ENCODE measurements at regions of chr1 and their contacts with region 1.

Region 1: DNA sequence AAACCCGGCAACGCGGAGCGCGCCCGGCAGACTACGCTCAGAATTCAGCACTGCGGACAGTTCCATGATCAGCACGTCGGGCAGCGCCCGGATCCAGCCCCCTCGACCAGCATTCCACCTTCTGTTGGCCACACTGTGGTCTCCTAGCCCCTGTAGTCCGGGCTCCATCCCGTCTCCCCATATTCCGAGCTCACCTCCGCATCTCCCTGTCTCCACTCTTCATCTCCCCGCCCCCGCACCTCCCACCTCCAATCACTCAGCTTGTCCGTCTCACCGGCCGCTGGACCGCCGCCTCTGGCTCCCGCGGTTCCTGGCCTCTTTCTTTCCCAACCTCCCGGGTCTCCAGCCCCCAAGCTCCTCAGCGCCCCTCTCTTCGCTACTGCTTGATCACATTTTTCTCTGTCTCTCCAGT is 500 bp downstream of the EPHA10 start:
- DNase-seq: peak in 5 of 9 donors; percentile 11 to 62 (median 14)
- ATAC-seq: no peak
- H3K4me3 ChIP-seq: no peak overlapping the region
- H3K4me3 Mint-ChIP-seq: peak overlapping the region in 4 of 10 donors; percentile 26 to 52 (median 46)
- H3K27ac ChIP-seq: no peak overlapping the region
- H3K27ac Mint-ChIP-seq: no peak overlapping the region
- H3K4me1 ChIP-seq: no peaks in the 10 kb centered on the region
- H3K4me1 Mint-ChIP-seq: peaks cover 4 to 22% (median 20%) of the 10 kb centered on the region in 7 donors
- H3K27me3 ChIP-seq: peaks cover 0 to 9% of the 10 kb centered on the region in 2 donors
- H3K27me3 Mint-ChIP-seq: peaks cover 60 to 71% (median 68%) of the 10 kb centered on the region in 5 donors

Region 2: DNA sequence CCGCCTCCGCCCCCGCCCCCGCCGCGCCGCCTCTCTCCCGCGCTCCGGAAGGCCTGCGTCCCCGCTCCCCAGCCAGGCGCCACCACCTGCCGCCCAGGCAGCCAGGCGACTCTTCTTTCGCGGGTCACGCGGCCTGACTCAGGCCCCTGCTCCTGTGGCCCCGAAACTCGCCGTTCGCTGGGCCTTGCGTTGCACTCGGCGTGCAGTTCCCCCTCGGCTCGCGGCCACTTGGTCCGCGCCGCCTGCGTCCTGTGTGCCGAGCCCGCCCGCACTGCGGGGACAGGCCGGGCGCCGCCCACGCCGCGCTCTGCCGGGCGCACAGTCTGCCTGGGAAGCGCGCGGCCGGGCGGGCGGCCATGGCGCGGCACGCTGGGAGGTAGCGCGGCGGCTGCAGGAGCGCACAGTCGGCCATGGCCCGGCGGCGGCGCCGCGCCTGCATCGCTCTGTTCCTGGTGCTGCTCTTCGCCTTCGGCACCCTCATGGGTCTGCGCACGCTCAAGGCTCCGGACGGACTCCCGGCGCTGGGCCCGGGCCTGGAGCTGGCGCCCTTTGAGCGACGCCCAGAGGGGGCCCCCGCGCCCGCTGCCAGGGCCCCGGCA is 29.5 kb after region 1 on chr1 and contains the start of gene MANEAL:
- CTCF ChIA-PET with region 1: no interaction called
- POLR2A ChIA-PET with region 1: no interaction called
- intact Hi-C with region 1: loop called in 1 of 2 experiments (anchors 2 kb)
- DNase-seq: peak in 5 of 9 donors; percentile 4 to 57 (median 24)
- ATAC-seq: peak; percentile 81
- H3K4me3 ChIP-seq: no peak within 1 kb of the TSS
- H3K4me3 Mint-ChIP-seq: peak within 1 kb of the TSS; percentile 35 to 82 (median 75)
- H3K27ac ChIP-seq: no peak within 1 kb of the TSS
- H3K27ac Mint-ChIP-seq: no peak within 1 kb of the TSS
- H3K4me1 ChIP-seq: peaks cover 3 to 8% of the 10 kb centered on the region in 2 donors
- H3K4me1 Mint-ChIP-seq: peaks cover 8 to 25% (median 14%) of the 10 kb centered on the region in 7 donors
- H3K27me3 ChIP-seq: peaks cover 0 to 8% of the 10 kb centered on the region in 2 donors
- H3K27me3 Mint-ChIP-seq: peaks cover 33 to 43% (median 38%) of the 10 kb centered on the region in 5 donors
- total RNA-seq, gene MANEAL: 0.66 to 2.1 (median 1.1) TPM

Region 3: GRCh38 chr1:38138498-38139233 is 374.2 kb after region 1 on chr1:
- CTCF ChIA-PET with region 1: no interaction called
- POLR2A ChIA-PET with region 1: no interaction called
- intact Hi-C with region 1: no loop called
- DNase-seq: no peak
- ATAC-seq: no peak
- H3K4me3 ChIP-seq: no peak overlapping the region
- H3K4me3 Mint-ChIP-seq: no peak overlapping the region
- H3K27ac ChIP-seq: no peak overlapping the region
- H3K27ac Mint-ChIP-seq: no peak overlapping the region
- H3K4me1 ChIP-seq: no peaks in the 10 kb centered on the region
- H3K4me1 Mint-ChIP-seq: peaks cover 0 to 4% (median 0%) of the 10 kb centered on the region in 7 donors
- H3K27me3 ChIP-seq: no peaks in the 10 kb centered on the region
- H3K27me3 Mint-ChIP-seq: peaks cover 74 to 92% (median 79%) of the 10 kb centered on the region in 5 donors